ENCODE measurements at regions of chr2 and their contacts with region 1.

Region 1: GRCh38 chr2:109450574-109451273 is 163.0 kb downstream of the SEPTIN10 start:
- DNase-seq: peak in 4 of 10 donors; percentile 8 to 62 (median 34)
- H3K4me3 ChIP-seq: no peak overlapping the region
- H3K27ac ChIP-seq: peak overlapping the region in 33 of 59 donors; percentile 1 to 88 (median 43)
- H3K27me3 ChIP-seq: no peaks in the 10 kb centered on the region
- CTCF ChIP-seq: no peak

Region 2: DNA sequence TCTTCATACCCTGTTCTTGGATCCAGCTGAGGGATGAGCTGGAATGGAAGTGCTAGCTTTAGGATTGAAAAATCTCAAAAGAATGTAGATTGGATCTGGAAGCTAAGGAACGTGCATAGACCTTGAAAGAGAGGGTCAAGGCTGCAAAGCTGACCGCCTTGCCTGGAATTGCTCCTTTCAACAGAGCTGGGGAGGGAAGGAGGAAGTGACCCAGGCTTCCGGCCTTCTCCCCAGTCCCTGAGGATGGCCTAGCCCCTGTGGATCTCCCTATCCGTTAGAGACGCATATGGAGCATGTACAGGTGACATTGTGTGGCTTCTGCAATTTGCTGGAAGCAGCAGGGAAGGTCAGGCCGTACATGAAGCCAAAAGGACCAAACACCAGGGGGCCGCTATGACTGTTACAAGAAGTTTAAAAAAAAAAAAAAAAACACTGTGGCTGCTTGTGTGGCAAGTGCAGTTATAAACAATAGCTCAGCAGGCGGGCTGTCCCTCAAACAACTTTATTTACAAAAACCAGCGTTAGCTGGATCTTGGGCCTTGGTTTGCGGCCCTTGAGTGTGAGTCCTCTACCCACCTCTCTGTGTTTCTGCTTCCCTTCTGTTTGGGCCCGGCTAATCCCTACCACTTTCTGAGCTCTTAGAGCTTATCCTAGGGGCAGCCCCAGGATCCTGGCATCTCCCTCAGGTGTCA is 64.6 kb before region 1 on chr2:
- intact Hi-C with region 1: loop called in 1 of 2 experiments (anchors 5 kb)
- DNase-seq: peak in 2 of 10 donors; percentile 21 to 35
- H3K4me3 ChIP-seq: no peak overlapping the region
- H3K27ac ChIP-seq: peak overlapping the region in 2 of 59 donors; percentile 28 to 34
- H3K27me3 ChIP-seq: no peaks in the 10 kb centered on the region
- CTCF ChIP-seq: peak in 1 of 56 donors; percentile 9